Natural killer cell (primary cell): ENCODE measurements at regions of chr2 and their contacts with region 1.

Region 1: GRCh38 chr2:156021146-156022035 is 311.1 kb downstream of the NR4A2 start:
- DNase-seq: no peak
- ATAC-seq: no peak
- H3K4me3 ChIP-seq: no peak overlapping the region
- H3K4me3 Mint-ChIP-seq: no peak overlapping the region
- H3K27ac ChIP-seq: no peak overlapping the region
- H3K27ac Mint-ChIP-seq: no peak overlapping the region
- H3K4me1 ChIP-seq: no peaks in the 10 kb centered on the region
- H3K4me1 Mint-ChIP-seq: no peaks in the 10 kb centered on the region
- H3K27me3 ChIP-seq: no peaks in the 10 kb centered on the region
- H3K27me3 Mint-ChIP-seq: no peaks in the 10 kb centered on the region
- CTCF ChIP-seq: no peak

Region 2: GRCh38 chr2:155747531-155747930 is 273.9 kb before region 1 on chr2:
- intact Hi-C with region 1: no loop called
- DNase-seq: no peak
- ATAC-seq: no peak
- H3K4me3 ChIP-seq: no peak overlapping the region
- H3K4me3 Mint-ChIP-seq: no peak overlapping the region
- H3K27ac ChIP-seq: no peak overlapping the region
- H3K27ac Mint-ChIP-seq: no peak overlapping the region
- H3K4me1 ChIP-seq: no peaks in the 10 kb centered on the region
- H3K4me1 Mint-ChIP-seq: no peaks in the 10 kb centered on the region
- H3K27me3 ChIP-seq: no peaks in the 10 kb centered on the region
- H3K27me3 Mint-ChIP-seq: no peaks in the 10 kb centered on the region
- CTCF ChIP-seq: no peak

Region 3: GRCh38 chr2:155866477-155866876 is 154.9 kb before region 1 on chr2:
- intact Hi-C with region 1: no loop called
- DNase-seq: no peak
- ATAC-seq: no peak
- H3K4me3 ChIP-seq: no peak overlapping the region
- H3K4me3 Mint-ChIP-seq: no peak overlapping the region
- H3K27ac ChIP-seq: no peak overlapping the region
- H3K27ac Mint-ChIP-seq: no peak overlapping the region
- H3K4me1 ChIP-seq: no peaks in the 10 kb centered on the region
- H3K4me1 Mint-ChIP-seq: no peaks in the 10 kb centered on the region
- H3K27me3 ChIP-seq: no peaks in the 10 kb centered on the region
- H3K27me3 Mint-ChIP-seq: no peaks in the 10 kb centered on the region
- CTCF ChIP-seq: no peak

Region 4: DNA sequence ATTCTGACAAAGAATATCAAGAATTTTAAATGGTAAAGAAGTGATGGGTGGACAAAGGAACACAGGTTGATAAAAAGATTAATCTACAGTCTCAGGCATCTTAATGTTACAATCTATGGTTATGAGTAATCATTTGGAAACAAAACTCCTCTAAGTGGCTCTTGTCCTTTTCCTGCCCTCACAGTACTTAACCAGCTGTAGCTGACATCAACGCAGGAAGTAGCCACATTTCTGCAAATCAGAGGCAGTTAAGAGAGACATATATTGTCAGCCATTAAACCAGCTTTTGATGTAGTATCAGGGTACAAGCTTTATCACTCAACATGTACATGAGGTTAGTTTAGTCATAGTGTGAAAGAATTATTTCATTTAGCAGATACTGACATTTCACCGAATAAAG is 66.5 kb after region 1 on chr2:
- intact Hi-C with region 1: loop called (anchors 1 kb)
- DNase-seq: no peak
- ATAC-seq: no peak
- H3K4me3 ChIP-seq: no peak overlapping the region
- H3K4me3 Mint-ChIP-seq: no peak overlapping the region
- H3K27ac ChIP-seq: no peak overlapping the region
- H3K27ac Mint-ChIP-seq: no peak overlapping the region
- H3K4me1 ChIP-seq: no peaks in the 10 kb centered on the region
- H3K4me1 Mint-ChIP-seq: no peaks in the 10 kb centered on the region
- H3K27me3 ChIP-seq: no peaks in the 10 kb centered on the region
- H3K27me3 Mint-ChIP-seq: no peaks in the 10 kb centered on the region
- CTCF ChIP-seq: no peak